Endothelial cell of umbilical vein (primary cell): ENCODE measurements at regions of chr14 and their contacts with region 1.

Region 1: GRCh38 chr14:53217295-53217994 is 64.3 kb upstream of the DDHD1 start:
- DNase-seq: peak; percentile 79
- H3K4me3 ChIP-seq: peak overlapping the region in 2 of 3 experiments; percentile 22 to 69
- H3K27ac ChIP-seq: no peak overlapping the region
- H3K4me1 ChIP-seq: no peaks in the 10 kb centered on the region
- H3K27me3 ChIP-seq: no peaks in the 10 kb centered on the region
- CTCF ChIP-seq: peak; percentile 29 to 58
- POLR2A ChIP-seq: no peak

Region 2: GRCh38 chr14:52485350-52485960 is 732.0 kb before region 1 on chr14:
- CTCF ChIA-PET with region 1: no interaction called
- POLR2A ChIA-PET with region 1: no interaction called
- dilution Hi-C with region 1: no loop called
- intact Hi-C with region 1: no loop called
- DNase-seq: no peak
- H3K4me3 ChIP-seq: no peak overlapping the region
- H3K27ac ChIP-seq: no peak overlapping the region
- H3K4me1 ChIP-seq: no peaks in the 10 kb centered on the region
- H3K27me3 ChIP-seq: no peaks in the 10 kb centered on the region
- CTCF ChIP-seq: no peak
- POLR2A ChIP-seq: no peak

Region 3: DNA sequence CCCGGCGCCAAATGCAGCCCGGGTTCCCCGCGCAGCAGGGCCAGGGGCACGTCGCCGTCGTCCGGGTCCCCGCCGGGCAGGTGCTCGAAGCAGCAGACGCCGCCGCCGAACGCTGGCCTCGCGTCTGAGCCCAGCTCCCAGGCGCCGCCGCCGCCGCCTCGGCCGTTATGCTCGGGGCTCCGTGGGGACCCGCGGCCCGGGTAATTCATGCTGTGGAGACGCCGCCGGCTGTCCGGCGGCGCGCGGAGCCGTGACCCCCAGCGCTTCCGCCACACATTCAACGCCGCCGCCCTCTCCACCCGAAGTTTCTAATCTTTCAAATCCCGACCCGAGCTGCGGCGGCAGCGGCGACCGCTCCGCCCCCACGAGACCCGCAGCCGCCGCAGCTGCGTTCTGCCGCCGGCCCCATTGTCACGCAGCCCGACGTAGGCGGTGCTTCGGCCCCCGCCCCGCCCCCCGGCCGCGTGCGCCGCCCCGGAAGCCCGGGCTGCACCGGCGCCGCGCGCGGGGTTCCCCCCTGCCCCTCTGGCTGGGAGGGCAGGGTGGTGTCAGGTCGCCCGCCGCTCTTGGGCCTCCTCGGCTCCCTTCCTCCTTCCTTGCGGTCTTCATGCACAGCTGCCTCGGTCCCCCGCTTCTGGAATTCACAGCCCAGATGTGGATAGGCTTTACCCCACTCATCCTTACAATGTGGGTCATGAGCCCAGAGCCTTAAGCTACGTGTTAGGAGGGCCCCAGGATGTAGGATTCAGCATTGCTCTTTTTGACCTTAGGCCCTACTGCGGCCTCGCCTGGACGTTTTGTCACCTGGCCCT is 64.3 kb before region 1 on chr14 and contains the start of gene DDHD1:
- CTCF ChIA-PET with region 1: interaction called, 9 read pairs
- POLR2A ChIA-PET with region 1: no interaction called
- dilution Hi-C with region 1: no loop called
- intact Hi-C with region 1: loop called (anchors 2 kb)
- DNase-seq: peak; percentile 67
- H3K4me3 ChIP-seq: peak within 1 kb of the TSS; percentile 59 to 73 (median 61)
- H3K27ac ChIP-seq: peak within 1 kb of the TSS; percentile 61
- H3K4me1 ChIP-seq: peaks cover 8% of the 10 kb centered on the region
- H3K27me3 ChIP-seq: no peaks in the 10 kb centered on the region
- CTCF ChIP-seq: no peak
- POLR2A ChIP-seq: peak; percentile 66
- total RNA-seq, gene DDHD1: 12.4 and 13.9 TPM in 2 replicates

Region 4: GRCh38 chr14:53265025-53265424 is 47.6 kb after region 1 on chr14:
- CTCF ChIA-PET with region 1: no interaction called
- POLR2A ChIA-PET with region 1: no interaction called
- dilution Hi-C with region 1: no loop called
- intact Hi-C with region 1: loop called (anchors 1 kb)
- DNase-seq: no peak
- H3K4me3 ChIP-seq: no peak overlapping the region
- H3K27ac ChIP-seq: no peak overlapping the region
- H3K4me1 ChIP-seq: no peaks in the 10 kb centered on the region
- H3K27me3 ChIP-seq: peaks cover 0 to 7% of the 10 kb centered on the region in 2 experiments
- CTCF ChIP-seq: no peak
- POLR2A ChIP-seq: no peak